ENCODE measurements at regions of chr4 and their contacts with region 1.

Region 1: DNA sequence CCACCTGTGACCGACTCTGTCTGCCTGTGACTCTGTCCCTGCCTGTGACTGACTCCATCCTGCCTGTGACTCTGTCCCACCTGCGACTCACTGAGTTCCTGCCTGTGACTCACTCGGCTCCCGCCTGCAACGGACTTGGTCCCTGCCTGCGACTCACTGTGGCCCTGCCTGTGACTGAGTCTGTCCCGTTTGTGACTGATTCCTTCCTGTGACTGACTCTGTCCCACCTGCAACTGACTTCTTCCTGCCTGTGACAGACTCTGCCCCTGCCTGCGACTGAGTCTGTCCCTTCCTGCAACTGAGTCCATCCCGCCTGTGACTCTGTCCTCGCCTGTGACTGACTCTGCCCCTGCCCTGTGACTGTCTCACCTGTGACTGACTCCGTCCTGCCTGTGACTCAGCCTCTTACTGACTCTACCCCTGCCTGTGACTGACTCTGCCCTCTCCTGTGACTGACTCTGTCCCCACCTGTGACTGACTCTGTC is 9.6 kb upstream of the UVSSA start:
- DNase-seq: peak in 1 of 2 donors; percentile 57
- H3K4me3 ChIP-seq: no peak overlapping the region
- H3K27ac ChIP-seq: peak overlapping the region in 3 of 5 donors; percentile 41 to 66 (median 43)
- H3K4me1 ChIP-seq: peaks cover 0 to 4% (median 0%) of the 10 kb centered on the region in 4 donors
- H3K27me3 ChIP-seq: no peaks in the 10 kb centered on the region
- CTCF ChIP-seq: no peak
- EP300 ChIP-seq: no peak
- POLR2A ChIP-seq: no peak

Region 2: DNA sequence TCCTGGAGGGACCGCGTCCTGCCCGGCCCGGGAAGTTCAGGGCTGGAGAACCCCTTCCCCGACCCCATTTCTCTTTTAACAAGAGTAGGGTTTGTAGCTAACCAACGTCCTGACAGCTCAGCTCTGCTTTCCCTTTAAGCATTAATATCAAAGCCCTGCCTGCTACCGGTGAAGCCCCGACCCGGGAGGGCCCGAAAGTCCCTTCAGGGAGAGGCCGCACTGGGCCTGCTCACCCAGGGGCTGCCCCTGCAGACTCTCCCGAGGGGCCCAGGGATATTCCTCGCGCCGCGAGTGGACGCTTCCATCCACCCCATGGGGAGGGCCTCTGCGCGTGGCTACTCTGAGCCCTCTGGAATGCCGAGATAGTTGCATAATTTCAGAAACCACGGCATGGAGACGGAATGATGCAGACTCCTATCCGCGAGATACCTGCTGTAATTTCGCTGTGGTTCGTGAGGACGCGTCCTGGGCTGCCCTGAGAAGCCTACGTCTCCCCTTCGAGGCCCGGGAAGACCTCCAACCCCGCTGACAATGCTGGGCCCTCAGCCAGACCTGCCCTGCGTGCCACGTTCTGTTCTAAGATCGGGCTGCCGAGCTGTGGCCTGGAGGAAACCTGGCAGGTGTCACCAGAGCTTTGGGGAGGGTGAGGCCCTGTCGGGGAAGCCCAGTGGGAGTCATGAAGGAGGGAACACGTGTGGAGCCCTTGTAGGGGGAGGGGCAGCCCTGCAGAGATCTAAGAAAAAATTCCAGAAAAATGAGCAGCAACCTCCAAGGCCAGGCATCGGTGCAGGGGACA is 87.5 kb before region 1 on chr4:
- intact Hi-C with region 1: loop called (anchors 10 kb)
- DNase-seq: peak in 1 of 2 donors; percentile 60
- H3K4me3 ChIP-seq: peak overlapping the region; percentile 61 to 96 (median 76)
- H3K27ac ChIP-seq: peak overlapping the region; percentile 97 to 98 (median 97)
- H3K4me1 ChIP-seq: peaks cover 38 to 54% (median 44%) of the 10 kb centered on the region in 4 donors
- H3K27me3 ChIP-seq: no peaks in the 10 kb centered on the region
- CTCF ChIP-seq: no peak
- EP300 ChIP-seq: no peak
- POLR2A ChIP-seq: no peak

Region 3: GRCh38 chr4:1644891-1645657 is 307.7 kb after region 1 on chr4:
- intact Hi-C with region 1: no loop called
- DNase-seq: peak; percentile 72 to 83
- H3K4me3 ChIP-seq: peak overlapping the region in 1 of 4 donors; percentile 7
- H3K27ac ChIP-seq: peak overlapping the region in 4 of 5 donors; percentile 14 to 84 (median 46)
- H3K4me1 ChIP-seq: peaks cover 7 to 19% (median 16%) of the 10 kb centered on the region in 4 donors
- H3K27me3 ChIP-seq: no peaks in the 10 kb centered on the region
- CTCF ChIP-seq: no peak
- EP300 ChIP-seq: no peak
- POLR2A ChIP-seq: no peak